ENCODE measurements at regions of chr10 and their contacts with region 1.

Region 1: DNA sequence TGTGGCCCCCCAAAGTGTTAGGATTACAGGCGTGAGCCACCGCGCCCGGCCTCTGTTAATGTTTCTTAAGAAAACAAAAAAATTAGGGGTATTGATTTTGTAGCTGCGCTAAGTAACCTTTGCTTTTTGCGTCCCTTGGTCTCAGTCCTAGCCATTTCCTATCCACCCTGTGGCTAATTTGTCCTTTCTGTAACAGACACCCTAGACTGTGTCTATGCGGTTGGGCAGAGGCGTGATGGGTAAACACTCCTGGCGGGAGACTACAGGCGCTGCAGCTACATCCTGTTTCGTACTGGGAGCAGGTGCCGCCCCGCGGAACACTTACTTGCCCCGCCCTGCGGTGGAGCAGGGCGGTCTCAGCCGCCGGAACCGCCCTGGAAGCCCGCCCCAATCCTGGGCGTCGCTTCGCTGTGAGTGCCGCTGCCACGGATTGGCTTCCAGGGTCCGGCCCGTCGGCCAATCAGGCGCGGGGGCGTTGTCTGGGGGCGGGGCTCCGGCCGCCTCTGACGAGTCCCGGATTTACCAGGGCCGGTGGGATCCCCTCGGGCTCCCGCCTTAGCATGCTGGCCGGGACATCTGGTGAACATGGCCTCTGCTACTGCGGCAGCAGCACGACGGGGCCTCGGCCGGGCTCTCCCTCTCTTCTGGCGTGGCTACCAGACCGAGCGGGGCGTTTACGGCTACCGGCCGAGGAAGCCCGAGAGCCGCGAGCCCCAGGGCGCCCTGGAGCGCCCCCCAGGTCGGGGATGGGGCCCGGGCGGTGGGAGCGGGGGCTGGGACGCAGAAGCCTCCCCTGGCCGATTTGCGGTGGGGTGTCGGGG is at the start of gene DHTKD1:
- DNase-seq: peak; percentile 97 to 99
- H3K4me3 ChIP-seq: peak within 1 kb of the TSS; percentile 68 to 98 (median 78)
- H3K27ac ChIP-seq: peak within 1 kb of the TSS; percentile 89; the same call in 1 of the 2 replicates
- H3K4me1 ChIP-seq: peaks cover 0 to 7% (median 1%) of the 10 kb centered on the region in 4 experiments; a peak in 3 of 7 replicates
- H3K27me3 ChIP-seq: no peaks in the 10 kb centered on the region
- CTCF ChIP-seq: peak; percentile 2 to 34 (median 33); a peak in 3 of 4 replicates
- EP300 ChIP-seq: no peak; a peak in 1 of 3 replicates
- POLR2A ChIP-seq: peak; percentile 94 to 95
- RAD21 ChIP-seq: peak; percentile 5 to 21; a peak in 1 of 4 replicates
- total RNA-seq, gene DHTKD1: 49.8 and 50.7 TPM in 2 replicates

Region 2: GRCh38 chr10:12042797-12043651 is 25.6 kb before region 1 on chr10 and contains the start of gene UPF2:
- CTCF ChIA-PET with region 1: interaction called, 3 read pairs
- POLR2A ChIA-PET with region 1: interaction called, 13 read pairs
- DNase-seq: peak; percentile 93 to 97
- H3K4me3 ChIP-seq: peak within 1 kb of the TSS; percentile 77 to 98 (median 94)
- H3K27ac ChIP-seq: peak within 1 kb of the TSS; percentile 100
- H3K4me1 ChIP-seq: no peaks in the 10 kb centered on the region; a peak in 2 of 7 replicates
- H3K27me3 ChIP-seq: no peaks in the 10 kb centered on the region
- CTCF ChIP-seq: no peak
- EP300 ChIP-seq: no peak; a peak in 1 of 3 replicates
- POLR2A ChIP-seq: no peak
- RAD21 ChIP-seq: no peak
- total RNA-seq, gene UPF2: 32.8 and 33.6 TPM in 2 replicates

Region 3: GRCh38 chr10:12081879-12082557 is 13.4 kb after region 1 on chr10:
- CTCF ChIA-PET with region 1: interaction called, 3 read pairs
- POLR2A ChIA-PET with region 1: interaction called, 19 read pairs
- DNase-seq: no peak
- H3K4me3 ChIP-seq: no peak overlapping the region
- H3K27ac ChIP-seq: no peak overlapping the region
- H3K4me1 ChIP-seq: no peaks in the 10 kb centered on the region; a peak in 1 of 7 replicates
- H3K27me3 ChIP-seq: no peaks in the 10 kb centered on the region
- CTCF ChIP-seq: no peak
- EP300 ChIP-seq: no peak
- POLR2A ChIP-seq: no peak
- RAD21 ChIP-seq: no peak

Measured in H1 (cell line).